ENCODE measurements at regions of chr20 and their contacts with region 1.

Region 1: DNA sequence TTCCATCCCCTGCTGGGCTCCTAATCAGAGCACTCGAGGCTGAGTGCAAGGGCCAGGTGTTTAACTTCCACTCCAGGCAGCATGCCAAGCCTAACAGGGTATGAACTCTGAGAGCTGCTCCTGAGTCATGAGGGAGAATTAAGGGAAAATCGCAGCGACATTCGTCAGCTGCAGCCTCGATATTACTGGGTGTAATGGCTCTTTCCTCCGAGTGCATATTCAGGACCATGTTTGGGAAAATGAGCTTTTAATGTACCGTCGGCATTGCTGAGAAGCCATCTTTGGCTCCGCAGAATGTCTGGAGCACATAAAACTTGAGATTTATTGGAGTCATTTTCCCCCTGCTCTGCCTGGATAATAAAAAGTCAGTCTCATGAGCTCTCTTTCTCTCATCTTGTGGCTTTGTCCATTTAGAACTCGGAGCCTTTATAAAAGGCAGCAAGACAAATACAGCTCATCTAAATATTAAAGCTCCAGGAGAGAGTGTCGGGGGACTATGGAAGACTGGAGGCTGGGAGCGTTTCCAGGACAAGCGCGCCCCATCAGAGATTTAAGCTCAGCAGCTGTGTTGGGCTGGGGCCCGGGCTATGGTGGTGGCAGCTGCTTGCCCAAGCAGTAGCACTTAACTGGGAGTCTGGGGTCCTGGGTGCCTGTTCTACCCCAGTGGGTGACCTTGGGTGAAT is 103.7 kb downstream of the TOX2 start:
- DNase-seq: peak; percentile 91
- H3K4me3 ChIP-seq: peak overlapping the region in 2 of 4 donors; percentile 6 to 13
- H3K27ac ChIP-seq: peak overlapping the region; percentile 76 to 87 (median 81)
- H3K4me1 ChIP-seq: peaks cover 0 to 60% (median 42%) of the 10 kb centered on the region in 4 donors
- H3K27me3 ChIP-seq: peaks cover 0 to 3% (median 0%) of the 10 kb centered on the region in 3 donors
- CTCF ChIP-seq: no peak
- EP300 ChIP-seq: peak; percentile 28 to 87 (median 50)
- POLR2A ChIP-seq: no peak

Region 2: GRCh38 chr20:43767686-43768474 is 250.5 kb before region 1 on chr20:
- intact Hi-C with region 1: loop called (anchors 5 kb)
- DNase-seq: no peak
- H3K4me3 ChIP-seq: no peak overlapping the region
- H3K27ac ChIP-seq: peak overlapping the region in 3 of 4 donors; percentile 26 to 48 (median 31)
- H3K4me1 ChIP-seq: peaks cover 0 to 24% (median 20%) of the 10 kb centered on the region in 4 donors
- H3K27me3 ChIP-seq: peaks cover 0 to 6% (median 0%) of the 10 kb centered on the region in 3 donors
- CTCF ChIP-seq: no peak
- EP300 ChIP-seq: no peak
- POLR2A ChIP-seq: no peak

Region 3: DNA sequence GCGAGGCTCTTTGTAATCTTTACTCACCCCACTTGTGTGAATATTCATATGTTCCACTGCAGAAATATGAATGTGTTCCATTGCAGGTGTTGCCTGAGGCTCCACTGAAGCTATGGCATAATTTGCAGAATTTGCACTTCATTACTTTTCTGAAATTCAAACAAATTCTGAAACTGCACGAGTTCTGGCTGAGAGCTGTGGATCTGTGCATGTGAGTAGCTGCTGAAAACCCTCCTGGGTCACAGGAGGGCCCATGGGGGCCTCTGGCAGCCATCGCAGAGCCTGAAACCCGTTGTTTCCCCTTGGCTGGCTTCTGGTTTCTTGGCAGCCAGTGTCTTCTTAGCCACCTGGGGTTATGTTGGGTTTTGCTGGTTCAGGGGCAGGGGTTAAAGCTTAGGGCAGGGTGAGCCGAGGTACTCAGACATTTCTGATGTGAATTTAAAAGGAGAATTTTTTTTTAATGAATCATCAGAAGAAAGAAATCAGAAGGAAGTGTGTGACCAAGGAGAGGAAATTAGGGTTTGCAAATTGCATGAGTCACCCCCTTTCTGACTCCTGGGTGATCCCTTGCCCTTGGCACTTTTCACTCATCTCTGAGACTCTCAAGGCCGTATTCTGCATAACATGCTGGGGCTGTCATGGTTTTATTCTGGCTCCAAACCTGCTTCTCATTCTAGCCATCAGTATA is 63.2 kb before region 1 on chr20:
- intact Hi-C with region 1: no loop called
- DNase-seq: no peak
- H3K4me3 ChIP-seq: no peak overlapping the region
- H3K27ac ChIP-seq: peak overlapping the region in 2 of 4 donors; percentile 35 to 62
- H3K4me1 ChIP-seq: peaks cover 0 to 18% (median 12%) of the 10 kb centered on the region in 4 donors
- H3K27me3 ChIP-seq: no peaks in the 10 kb centered on the region
- CTCF ChIP-seq: no peak
- EP300 ChIP-seq: no peak
- POLR2A ChIP-seq: no peak

Region 4: DNA sequence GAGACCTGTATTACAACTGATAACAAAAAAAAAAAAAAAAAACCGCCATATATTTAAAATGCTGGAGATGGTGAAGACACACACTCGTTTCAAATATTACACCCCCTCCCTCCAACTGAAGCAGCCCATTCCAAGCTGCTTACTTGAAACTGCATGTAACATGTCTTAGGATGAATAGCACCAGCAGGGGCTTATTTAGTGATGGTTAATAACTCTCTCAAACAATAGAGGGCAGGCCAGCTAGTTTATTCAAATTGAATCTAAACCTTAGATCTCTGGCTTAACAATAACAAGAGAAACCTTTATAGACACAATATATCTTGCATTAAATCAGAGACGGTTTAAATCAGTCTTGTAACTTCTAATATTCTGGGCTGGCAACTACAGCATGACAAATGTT is 177.9 kb after region 1 on chr20:
- intact Hi-C with region 1: loop called (anchors 10 kb)
- DNase-seq: no peak
- H3K4me3 ChIP-seq: no peak overlapping the region
- H3K27ac ChIP-seq: peak overlapping the region in 1 of 4 donors; percentile 28
- H3K4me1 ChIP-seq: peaks cover 0 to 23% (median 5%) of the 10 kb centered on the region in 4 donors
- H3K27me3 ChIP-seq: no peaks in the 10 kb centered on the region
- CTCF ChIP-seq: no peak
- EP300 ChIP-seq: no peak
- POLR2A ChIP-seq: no peak

Region 5: DNA sequence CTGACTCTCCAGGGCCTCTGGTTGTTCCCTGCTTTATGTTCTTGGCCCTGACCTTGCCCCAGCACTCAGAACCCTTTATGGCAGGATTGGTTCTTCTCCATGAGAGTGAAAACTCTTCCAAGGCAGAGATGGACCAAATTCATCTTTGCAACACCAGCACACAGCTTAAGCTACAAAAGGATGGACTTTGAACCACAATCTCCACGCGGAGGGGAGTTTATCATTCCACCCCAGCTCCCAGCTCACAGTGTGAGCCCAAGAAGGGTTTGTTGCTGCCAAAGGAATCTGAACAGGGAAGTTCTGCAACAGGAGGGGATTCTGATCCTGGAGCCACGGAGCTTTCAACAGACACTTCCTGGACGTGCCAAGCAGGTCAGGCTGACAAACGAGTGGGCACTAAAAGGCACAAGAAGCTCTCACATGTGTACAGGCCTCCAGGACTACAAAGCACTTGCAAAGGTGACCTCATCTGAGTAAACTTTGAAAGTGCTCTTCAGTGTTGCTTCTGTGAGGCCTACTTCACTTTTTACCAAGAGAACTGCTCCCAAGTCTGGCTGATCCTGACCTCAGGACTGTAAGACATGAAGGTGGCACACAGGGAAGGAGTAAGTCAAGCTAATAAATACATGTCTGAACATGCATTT is 283.7 kb after region 1 on chr20:
- intact Hi-C with region 1: no loop called
- DNase-seq: no peak
- H3K4me3 ChIP-seq: no peak overlapping the region
- H3K27ac ChIP-seq: no peak overlapping the region
- H3K4me1 ChIP-seq: no peaks in the 10 kb centered on the region
- H3K27me3 ChIP-seq: no peaks in the 10 kb centered on the region
- CTCF ChIP-seq: no peak
- EP300 ChIP-seq: no peak
- POLR2A ChIP-seq: no peak